Endothelial cell of umbilical vein (primary cell): ENCODE measurements at regions of chr13 and their contacts with region 1.

Region 1: GRCh38 chr13:100235311-100235901 is 146.5 kb downstream of the PCCA start:
- DNase-seq: peak; percentile 67
- H3K4me3 ChIP-seq: no peak overlapping the region
- H3K27ac ChIP-seq: no peak overlapping the region
- H3K4me1 ChIP-seq: peaks cover 17% of the 10 kb centered on the region
- H3K27me3 ChIP-seq: no peaks in the 10 kb centered on the region
- CTCF ChIP-seq: peak; percentile 25 to 38
- POLR2A ChIP-seq: no peak

Region 2: DNA sequence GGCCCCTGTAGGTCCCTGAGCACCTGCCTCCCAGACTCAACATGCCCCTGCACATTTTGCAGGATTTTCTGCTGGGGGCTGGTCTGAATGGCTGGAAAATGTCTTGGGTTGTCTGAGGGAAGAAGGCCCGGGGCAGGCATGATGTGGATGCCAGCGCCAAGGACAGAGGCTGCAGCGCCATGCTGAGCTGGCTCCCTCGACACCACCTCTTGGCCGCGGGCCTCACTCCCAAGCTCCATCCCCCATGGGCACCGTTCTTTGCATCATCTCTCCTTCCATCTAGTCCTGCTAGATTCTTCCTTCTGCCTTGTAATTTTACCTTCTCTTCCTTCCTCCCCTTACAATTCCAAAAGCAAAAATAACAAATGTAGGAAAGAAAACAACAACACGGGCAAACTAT is 334.4 kb before region 1 on chr13:
- CTCF ChIA-PET with region 1: interaction called, 10 read pairs
- POLR2A ChIA-PET with region 1: no interaction called
- dilution Hi-C with region 1: no loop called
- intact Hi-C with region 1: loop called (anchors 5 kb)
- DNase-seq: no peak
- H3K4me3 ChIP-seq: no peak overlapping the region
- H3K27ac ChIP-seq: no peak overlapping the region
- H3K4me1 ChIP-seq: no peaks in the 10 kb centered on the region
- H3K27me3 ChIP-seq: peaks cover 26 to 31% of the 10 kb centered on the region in 2 experiments
- CTCF ChIP-seq: no peak
- POLR2A ChIP-seq: no peak

Region 3: GRCh38 chr13:99969919-99970621 is 265.3 kb before region 1 on chr13:
- CTCF ChIA-PET with region 1: interaction called, 14 read pairs
- POLR2A ChIA-PET with region 1: no interaction called
- dilution Hi-C with region 1: no loop called
- intact Hi-C with region 1: no loop called
- DNase-seq: no peak
- H3K4me3 ChIP-seq: no peak overlapping the region
- H3K27ac ChIP-seq: no peak overlapping the region
- H3K4me1 ChIP-seq: no peaks in the 10 kb centered on the region
- H3K27me3 ChIP-seq: peaks cover 79 to 94% of the 10 kb centered on the region in 2 experiments
- CTCF ChIP-seq: no peak
- POLR2A ChIP-seq: no peak

Region 4: GRCh38 chr13:99990126-99990977 is 245.1 kb before region 1 on chr13:
- CTCF ChIA-PET with region 1: interaction called, 9 read pairs
- POLR2A ChIA-PET with region 1: no interaction called
- dilution Hi-C with region 1: no loop called
- intact Hi-C with region 1: loop called (anchors 5 kb)
- DNase-seq: no peak
- H3K4me3 ChIP-seq: no peak overlapping the region
- H3K27ac ChIP-seq: no peak overlapping the region
- H3K4me1 ChIP-seq: no peaks in the 10 kb centered on the region
- H3K27me3 ChIP-seq: peaks cover 88 to 98% of the 10 kb centered on the region in 2 experiments
- CTCF ChIP-seq: no peak
- POLR2A ChIP-seq: no peak

Region 5: DNA sequence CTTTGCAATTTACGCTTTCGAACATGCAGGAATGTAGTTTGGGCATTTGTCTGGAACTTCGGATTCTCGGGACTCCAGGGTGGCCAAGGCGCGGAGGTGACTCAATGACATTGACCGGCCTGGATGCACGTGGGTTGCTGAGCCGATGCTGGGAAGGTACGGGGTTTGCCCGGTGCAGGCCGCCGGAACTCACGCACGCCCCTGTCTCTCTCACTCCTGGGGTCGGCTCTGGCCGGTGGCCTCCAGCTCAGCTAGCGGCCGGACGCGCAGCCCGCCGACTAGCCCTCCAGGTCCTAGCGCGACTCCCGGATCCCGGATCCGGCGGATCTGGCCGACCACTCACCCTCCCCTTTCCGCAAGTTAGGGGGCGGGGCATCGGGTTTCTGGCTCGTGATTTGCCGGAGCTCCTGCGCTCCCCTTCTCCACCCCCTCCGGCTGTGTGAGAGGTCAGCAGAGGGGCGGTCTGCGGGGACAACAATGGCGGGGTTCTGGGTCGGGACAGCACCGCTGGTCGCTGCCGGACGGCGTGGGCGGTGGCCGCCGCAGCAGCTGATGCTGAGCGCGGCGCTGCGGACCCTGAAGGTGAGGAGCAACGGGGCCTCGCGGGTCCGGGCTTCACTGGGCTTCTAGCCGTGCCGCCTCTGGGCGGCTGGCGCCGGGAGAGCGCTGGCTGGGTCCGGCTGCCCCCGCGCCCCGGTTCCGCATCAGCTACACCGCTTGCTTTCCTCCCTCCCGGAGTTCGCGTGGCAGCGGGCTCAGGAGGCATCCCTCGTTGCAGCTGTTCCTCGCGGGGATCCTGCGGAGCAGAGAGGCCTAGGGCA is 146.6 kb before region 1 on chr13 and contains the start of gene PCCA:
- CTCF ChIA-PET with region 1: interaction called, 16 read pairs
- POLR2A ChIA-PET with region 1: no interaction called
- dilution Hi-C with region 1: no loop called
- intact Hi-C with region 1: loop called (anchors 2 kb)
- DNase-seq: peak; percentile 94
- H3K4me3 ChIP-seq: peak within 1 kb of the TSS; percentile 56 to 82 (median 82)
- H3K27ac ChIP-seq: peak within 1 kb of the TSS; percentile 43
- H3K4me1 ChIP-seq: peaks cover 8% of the 10 kb centered on the region
- H3K27me3 ChIP-seq: no peaks in the 10 kb centered on the region
- CTCF ChIP-seq: no peak
- POLR2A ChIP-seq: peak; percentile 85
- total RNA-seq, gene PCCA: 19.8 and 20.2 TPM in 2 replicates

Region 6: GRCh38 chr13:100514788-100515409 is 279.5 kb after region 1 on chr13:
- CTCF ChIA-PET with region 1: interaction called, 120 read pairs
- POLR2A ChIA-PET with region 1: no interaction called
- dilution Hi-C with region 1: no loop called
- intact Hi-C with region 1: loop called (anchors 1 kb)
- DNase-seq: peak; percentile 79
- H3K4me3 ChIP-seq: no peak overlapping the region
- H3K27ac ChIP-seq: no peak overlapping the region
- H3K4me1 ChIP-seq: no peaks in the 10 kb centered on the region
- H3K27me3 ChIP-seq: no peaks in the 10 kb centered on the region
- CTCF ChIP-seq: peak; percentile 81 to 91
- POLR2A ChIP-seq: no peak

Region 7: DNA sequence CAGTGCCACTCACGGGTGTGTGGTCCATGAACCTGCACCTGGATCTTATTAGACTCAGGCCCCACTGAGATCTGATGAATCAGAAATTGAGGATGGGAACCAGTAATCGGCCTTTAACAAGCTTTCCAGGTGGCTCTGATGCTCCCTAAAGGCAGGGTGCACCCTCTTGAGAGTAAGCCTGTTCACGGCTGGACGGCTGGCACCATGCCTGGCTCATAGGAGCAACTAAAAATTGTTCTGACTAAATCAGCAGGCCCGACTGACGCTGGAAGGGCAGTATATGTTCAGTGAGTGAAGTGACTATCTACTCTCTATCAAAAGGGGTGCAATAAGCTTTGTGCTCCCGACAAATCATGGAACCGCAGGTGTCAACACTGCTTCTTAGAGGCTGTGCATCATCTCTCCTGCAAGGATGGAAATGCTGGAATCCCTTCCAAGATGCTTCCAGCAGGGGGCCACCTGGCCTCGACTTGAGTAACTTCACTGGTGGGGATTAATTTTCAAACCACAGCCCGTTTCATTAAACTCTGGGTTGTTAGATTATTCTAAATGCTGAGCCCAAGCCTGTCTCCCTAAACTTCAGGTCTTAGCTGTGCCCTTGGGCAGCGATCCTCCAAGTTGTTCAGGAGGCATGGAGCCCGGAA is 410.7 kb after region 1 on chr13:
- CTCF ChIA-PET with region 1: no interaction called
- POLR2A ChIA-PET with region 1: no interaction called
- dilution Hi-C with region 1: no loop called
- intact Hi-C with region 1: no loop called
- DNase-seq: peak; percentile 34
- H3K4me3 ChIP-seq: no peak overlapping the region
- H3K27ac ChIP-seq: no peak overlapping the region
- H3K4me1 ChIP-seq: no peaks in the 10 kb centered on the region
- H3K27me3 ChIP-seq: no peaks in the 10 kb centered on the region
- CTCF ChIP-seq: peak; percentile 56 to 57
- POLR2A ChIP-seq: no peak

Region 8: GRCh38 chr13:101594936-101595335 is 1359.5 kb after region 1 on chr13:
- CTCF ChIA-PET with region 1: no interaction called
- POLR2A ChIA-PET with region 1: no interaction called
- dilution Hi-C with region 1: no loop called
- intact Hi-C with region 1: no loop called
- DNase-seq: no peak
- H3K4me3 ChIP-seq: no peak overlapping the region
- H3K27ac ChIP-seq: no peak overlapping the region
- H3K4me1 ChIP-seq: no peaks in the 10 kb centered on the region
- H3K27me3 ChIP-seq: no peaks in the 10 kb centered on the region
- CTCF ChIP-seq: no peak
- POLR2A ChIP-seq: no peak